PC-9 (cell line): ENCODE measurements at regions of chr1 and their contacts with region 1.

Region 1: DNA sequence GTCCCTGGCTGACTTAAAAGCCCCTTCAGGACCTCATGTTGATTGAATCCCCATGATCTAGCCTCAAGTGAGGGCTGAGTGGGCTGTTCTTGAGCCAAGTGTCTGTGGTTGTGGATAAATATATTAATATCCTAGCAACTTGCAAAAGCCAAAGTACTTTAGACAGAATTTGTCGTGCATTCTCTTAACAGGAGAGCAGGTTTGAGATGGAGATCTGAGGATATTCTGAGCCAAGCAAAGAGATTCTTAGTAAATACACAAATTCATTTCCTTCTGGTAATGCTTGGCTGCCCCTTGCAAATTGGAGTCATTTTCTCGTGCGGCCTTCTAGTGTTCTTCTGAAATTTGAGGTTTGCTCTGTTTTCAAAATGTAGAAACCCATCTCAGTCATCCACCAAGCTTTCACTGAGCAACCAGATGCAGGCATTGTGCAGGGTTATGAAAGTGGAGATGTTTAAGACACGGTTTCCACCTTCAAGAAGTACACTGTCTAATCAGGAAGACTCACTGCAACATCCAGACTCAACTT is 242.1 kb upstream of the JUN start:
- DNase-seq: no peak
- H3K4me3 ChIP-seq: no peak overlapping the region
- H3K27ac ChIP-seq: no peak overlapping the region
- H3K4me1 ChIP-seq: peaks cover 46% of the 10 kb centered on the region
- H3K27me3 ChIP-seq: no peaks in the 10 kb centered on the region
- CTCF ChIP-seq: no peak

Region 2: DNA sequence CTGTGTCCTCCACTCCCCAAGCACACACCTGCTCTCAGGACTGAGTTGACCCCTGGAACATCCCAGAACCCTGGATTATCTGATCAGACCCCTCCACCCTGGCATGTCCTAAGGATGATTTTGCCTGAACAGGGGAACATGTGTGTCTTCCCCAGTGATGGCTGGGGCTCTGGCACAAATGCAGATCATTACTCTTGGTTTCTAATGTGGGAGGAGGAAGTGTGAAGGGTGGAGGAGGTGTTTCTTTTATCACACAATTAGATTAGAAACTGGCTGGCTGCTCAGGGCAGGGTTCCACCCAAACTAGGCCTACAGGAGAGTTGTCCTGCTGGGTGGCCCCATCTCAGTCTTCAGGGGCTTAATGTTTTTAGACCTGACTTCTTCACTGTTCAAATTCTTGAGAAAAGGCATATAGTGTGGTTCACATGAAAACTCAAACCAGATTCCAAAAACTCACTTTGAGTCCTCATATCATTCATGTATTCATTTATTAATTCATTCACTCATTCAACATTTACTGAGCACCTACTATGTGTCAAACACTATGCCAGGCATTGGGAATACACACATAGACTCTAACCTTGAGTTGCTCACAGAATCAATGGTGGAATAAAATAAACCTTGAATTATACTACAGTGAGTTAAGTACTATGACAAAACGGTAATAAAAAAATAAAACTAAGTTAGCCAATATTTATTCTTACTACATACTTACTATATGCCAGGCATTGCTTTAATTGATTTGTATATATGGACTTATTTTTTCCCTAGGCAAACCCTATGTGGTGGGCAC is 20.3 kb before region 1 on chr1:
- CTCF ChIA-PET with region 1: no interaction called
- POLR2A ChIA-PET with region 1: interaction called, 8 read pairs
- intact Hi-C with region 1: loop called (anchors 2 kb)
- DNase-seq: no peak
- H3K4me3 ChIP-seq: no peak overlapping the region
- H3K27ac ChIP-seq: no peak overlapping the region
- H3K4me1 ChIP-seq: no peaks in the 10 kb centered on the region
- H3K27me3 ChIP-seq: no peaks in the 10 kb centered on the region
- CTCF ChIP-seq: no peak

Region 3: DNA sequence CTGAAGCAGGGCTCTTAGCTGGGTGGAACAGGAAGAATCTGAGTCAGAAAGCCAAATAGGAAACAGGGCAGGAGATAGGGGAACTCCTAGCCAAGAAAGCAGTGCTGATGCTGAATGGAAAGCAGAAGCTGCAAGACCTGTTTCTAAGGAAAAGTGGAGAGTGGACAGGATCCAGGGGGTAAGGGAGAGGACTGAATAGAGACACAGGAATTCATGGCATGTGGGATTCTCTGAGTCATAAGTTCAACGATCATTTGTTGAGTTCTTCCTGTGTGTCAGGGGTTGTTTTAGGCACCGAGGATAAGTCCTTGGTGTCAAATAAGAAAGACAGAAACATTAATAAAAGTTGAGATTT is 117.1 kb after region 1 on chr1:
- CTCF ChIA-PET with region 1: no interaction called
- POLR2A ChIA-PET with region 1: interaction called, 3 read pairs
- intact Hi-C with region 1: loop called (anchors 2 kb)
- DNase-seq: peak; percentile 76 to 99
- H3K4me3 ChIP-seq: peak overlapping the region; percentile 14; the same call in 1 of the 2 replicates
- H3K27ac ChIP-seq: peak overlapping the region; percentile 94
- H3K4me1 ChIP-seq: peaks cover 87% of the 10 kb centered on the region
- H3K27me3 ChIP-seq: no peaks in the 10 kb centered on the region
- CTCF ChIP-seq: no peak

Region 4: DNA sequence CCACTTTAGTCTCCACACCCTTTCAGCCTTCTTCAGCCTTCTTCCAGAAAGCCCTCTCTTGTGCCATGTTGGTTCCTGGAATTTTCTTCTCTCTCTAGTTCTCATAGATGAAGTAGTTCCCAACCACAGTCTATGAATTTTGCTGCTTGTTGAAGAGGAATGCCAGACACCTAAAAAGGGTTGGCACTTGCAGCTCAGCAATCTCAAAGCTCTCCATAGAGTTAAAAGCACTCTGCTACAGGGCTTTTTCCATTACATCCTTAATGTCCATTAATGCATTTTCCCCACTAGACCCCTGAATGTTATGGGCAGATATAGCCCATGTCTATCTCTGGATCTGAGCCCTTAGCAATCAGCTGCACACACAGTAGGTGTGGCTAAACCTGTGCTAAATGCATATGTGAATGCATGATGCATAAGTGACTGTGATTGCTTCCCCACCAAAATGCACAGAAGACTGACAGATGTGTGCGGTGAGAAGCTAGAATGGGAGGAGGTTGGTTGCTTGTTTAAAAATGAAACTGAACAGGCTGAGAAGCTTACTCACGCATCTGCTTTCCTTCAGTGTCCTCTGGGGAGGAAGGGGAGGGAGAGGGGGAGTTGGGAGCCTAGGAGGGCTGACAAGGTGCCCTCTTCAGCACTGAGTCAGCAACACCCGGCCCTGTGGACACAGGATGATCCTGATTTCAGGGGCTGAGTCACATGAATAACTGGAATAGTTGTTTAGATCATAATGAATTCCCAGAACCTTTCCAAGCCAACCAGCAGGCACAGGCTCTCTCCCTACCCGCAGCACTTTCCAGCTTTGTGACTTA is 124.8 kb after region 1 on chr1:
- CTCF ChIA-PET with region 1: no interaction called
- POLR2A ChIA-PET with region 1: no interaction called
- intact Hi-C with region 1: loop called (anchors 2 kb)
- DNase-seq: peak; percentile 82 to 92
- H3K4me3 ChIP-seq: peak overlapping the region; percentile 48
- H3K27ac ChIP-seq: peak overlapping the region; percentile 72
- H3K4me1 ChIP-seq: peaks cover 66% of the 10 kb centered on the region
- H3K27me3 ChIP-seq: no peaks in the 10 kb centered on the region
- CTCF ChIP-seq: no peak

Region 5: GRCh38 chr1:59499273-59499942 is 473.4 kb after region 1 on chr1:
- CTCF ChIA-PET with region 1: no interaction called
- POLR2A ChIA-PET with region 1: interaction called, 18 read pairs
- intact Hi-C with region 1: no loop called
- DNase-seq: peak in 1 of 2 experiments; percentile 76
- H3K4me3 ChIP-seq: peak overlapping the region; percentile 41
- H3K27ac ChIP-seq: peak overlapping the region; percentile 79
- H3K4me1 ChIP-seq: peaks cover 38% of the 10 kb centered on the region
- H3K27me3 ChIP-seq: no peaks in the 10 kb centered on the region
- CTCF ChIP-seq: no peak